ENCODE measurements at regions of chrX and their contacts with region 1.

Region 1: GRCh38 chrX:77899081-77899828 is at the start of gene COX7B:
- DNase-seq: peak; percentile 76
- H3K4me3 Mint-ChIP-seq: peak within 1 kb of the TSS; percentile 92
- H3K27ac Mint-ChIP-seq: peak within 1 kb of the TSS; percentile 95
- H3K4me1 Mint-ChIP-seq: peaks cover 17% of the 10 kb centered on the region
- H3K27me3 Mint-ChIP-seq: no peaks in the 10 kb centered on the region
- total RNA-seq, gene COX7B: 363 to 367 TPM

Region 2: GRCh38 chrX:76555814-76556213 is 1343.4 kb before region 1 on chrX:
- CTCF ChIA-PET with region 1: no interaction called
- intact Hi-C with region 1: loop called (anchors 5 kb)
- DNase-seq: peak; percentile 28
- H3K4me3 Mint-ChIP-seq: no peak overlapping the region
- H3K27ac Mint-ChIP-seq: no peak overlapping the region
- H3K4me1 Mint-ChIP-seq: no peaks in the 10 kb centered on the region
- H3K27me3 Mint-ChIP-seq: no peaks in the 10 kb centered on the region

Region 3: DNA sequence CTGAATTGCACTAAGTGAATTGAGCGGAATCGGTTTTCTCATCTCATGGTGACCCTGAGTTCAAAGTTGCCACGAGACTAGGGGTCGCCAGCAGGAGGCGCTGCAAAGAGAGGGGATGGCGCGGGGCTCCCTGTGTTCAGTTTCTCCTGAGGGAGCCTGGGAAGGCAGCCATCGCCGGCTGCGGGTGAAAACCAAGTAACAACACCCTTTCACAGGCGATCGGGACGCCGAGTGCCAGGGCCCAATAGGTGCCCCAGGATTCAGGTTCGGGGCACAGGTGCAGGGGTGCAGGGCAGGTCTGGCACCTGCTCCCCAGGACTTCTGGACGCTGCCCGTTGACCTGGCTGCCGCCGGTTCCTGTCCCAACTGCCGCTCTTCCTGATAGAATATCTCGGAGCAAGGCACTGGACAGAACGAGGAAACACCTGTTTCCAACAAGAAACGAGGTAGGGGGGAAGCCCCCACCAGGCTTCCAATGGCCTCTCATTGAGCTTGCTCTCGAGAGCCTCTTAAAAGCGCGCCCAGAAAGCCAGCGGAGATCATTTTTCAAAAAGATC is 453.1 kb before region 1 on chrX:
- CTCF ChIA-PET with region 1: interaction called, 4 read pairs
- intact Hi-C with region 1: loop called (anchors 2 kb)
- DNase-seq: peak; percentile 48
- H3K4me3 Mint-ChIP-seq: peak overlapping the region; percentile 72
- H3K27ac Mint-ChIP-seq: no peak overlapping the region
- H3K4me1 Mint-ChIP-seq: peaks cover 3% of the 10 kb centered on the region
- H3K27me3 Mint-ChIP-seq: peaks cover 14% of the 10 kb centered on the region

Region 4: DNA sequence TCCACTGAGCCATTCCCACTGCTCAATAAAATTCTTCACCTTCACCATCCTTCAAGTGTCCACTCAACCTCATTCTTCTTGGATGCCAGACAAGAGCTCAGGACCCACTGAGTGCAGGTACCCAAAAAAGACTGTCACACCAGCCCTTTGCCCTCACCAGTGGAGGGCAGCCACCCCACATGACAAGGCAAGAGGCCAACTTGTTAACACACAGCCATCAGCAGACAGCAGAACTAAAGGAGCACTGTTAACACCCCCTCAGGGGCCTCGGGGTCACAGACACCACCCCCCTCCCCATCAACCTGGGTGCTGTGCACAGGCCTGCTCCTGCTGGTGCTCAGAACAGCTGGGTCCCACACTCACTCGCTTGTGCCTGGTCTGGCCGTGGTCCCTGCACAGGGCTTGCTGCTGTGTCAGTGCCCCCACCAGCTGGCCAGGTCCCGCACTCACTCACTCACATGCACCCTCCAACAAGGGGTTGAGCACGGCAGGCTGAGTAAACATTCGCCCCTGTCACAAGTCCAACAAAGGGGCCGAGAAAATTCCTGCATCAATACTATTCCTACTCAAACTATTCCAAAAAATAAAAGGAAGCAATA is 167.3 kb before region 1 on chrX:
- CTCF ChIA-PET with region 1: no interaction called
- intact Hi-C with region 1: loop called (anchors 5 kb)
- DNase-seq: peak; percentile 12
- H3K4me3 Mint-ChIP-seq: no peak overlapping the region
- H3K27ac Mint-ChIP-seq: no peak overlapping the region
- H3K4me1 Mint-ChIP-seq: peaks cover 29% of the 10 kb centered on the region
- H3K27me3 Mint-ChIP-seq: no peaks in the 10 kb centered on the region

Region 5: GRCh38 chrX:77962068-77962902 is 63.0 kb after region 1 on chrX:
- CTCF ChIA-PET with region 1: no interaction called
- intact Hi-C with region 1: loop called (anchors 5 kb)
- DNase-seq: peak; percentile 14
- H3K4me3 Mint-ChIP-seq: peak overlapping the region; percentile 75
- H3K27ac Mint-ChIP-seq: peak overlapping the region; percentile 93
- H3K4me1 Mint-ChIP-seq: peaks cover 44% of the 10 kb centered on the region
- H3K27me3 Mint-ChIP-seq: no peaks in the 10 kb centered on the region

Region 6: DNA sequence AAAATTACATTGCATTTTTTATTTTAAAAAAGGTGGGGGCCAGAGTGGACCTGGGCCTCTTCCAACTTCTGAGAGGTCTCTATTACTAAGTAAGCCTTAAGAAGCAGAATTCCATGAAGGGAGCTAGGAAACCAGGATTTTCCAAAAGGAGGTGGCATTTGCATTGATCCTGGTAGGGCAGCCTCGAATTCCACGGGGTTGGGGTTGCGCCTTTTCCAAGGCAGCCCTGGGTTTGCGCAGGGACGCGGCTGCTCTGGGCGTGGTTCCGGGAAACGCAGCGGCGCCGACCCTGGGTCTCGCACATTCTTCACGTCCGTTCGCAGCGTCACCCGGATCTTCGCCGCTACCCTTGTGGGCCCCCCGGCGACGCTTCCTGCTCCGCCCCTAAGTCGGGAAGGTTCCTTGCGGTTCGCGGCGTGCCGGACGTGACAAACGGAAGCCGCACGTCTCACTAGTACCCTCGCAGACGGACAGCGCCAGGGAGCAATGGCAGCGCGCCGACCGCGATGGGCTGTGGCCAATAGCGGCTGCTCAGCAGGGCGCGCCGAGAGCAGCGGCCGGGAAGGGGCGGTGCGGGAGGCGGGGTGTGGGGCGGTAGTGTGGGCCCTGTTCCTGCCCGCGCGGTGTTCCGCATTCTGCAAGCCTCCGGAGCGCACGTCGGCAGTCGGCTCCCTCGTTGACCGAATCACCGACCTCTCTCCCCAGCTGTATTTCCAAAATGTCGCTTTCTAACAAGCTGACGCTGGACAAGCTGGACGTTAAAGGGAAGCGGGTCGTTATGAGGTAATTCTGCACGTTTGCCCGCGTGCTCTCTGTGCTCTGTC is 204.6 kb after region 1 on chrX and contains the start of gene PGK1:
- CTCF ChIA-PET with region 1: no interaction called
- intact Hi-C with region 1: loop called (anchors 1 kb)
- DNase-seq: peak; percentile 95
- H3K4me3 Mint-ChIP-seq: peak within 1 kb of the TSS; percentile 95
- H3K27ac Mint-ChIP-seq: peak within 1 kb of the TSS; percentile 92
- H3K4me1 Mint-ChIP-seq: peaks cover 28% of the 10 kb centered on the region
- H3K27me3 Mint-ChIP-seq: no peaks in the 10 kb centered on the region
- total RNA-seq, gene PGK1: 744 to 766 TPM

Measured in activated naive CD4-positive, alpha-beta T cell treated with anti-CD3 and anti-CD28 coated beads for 36 hours (primary cell).